ENCODE measurements at regions of chr6 and their contacts with region 1.

Region 1: DNA sequence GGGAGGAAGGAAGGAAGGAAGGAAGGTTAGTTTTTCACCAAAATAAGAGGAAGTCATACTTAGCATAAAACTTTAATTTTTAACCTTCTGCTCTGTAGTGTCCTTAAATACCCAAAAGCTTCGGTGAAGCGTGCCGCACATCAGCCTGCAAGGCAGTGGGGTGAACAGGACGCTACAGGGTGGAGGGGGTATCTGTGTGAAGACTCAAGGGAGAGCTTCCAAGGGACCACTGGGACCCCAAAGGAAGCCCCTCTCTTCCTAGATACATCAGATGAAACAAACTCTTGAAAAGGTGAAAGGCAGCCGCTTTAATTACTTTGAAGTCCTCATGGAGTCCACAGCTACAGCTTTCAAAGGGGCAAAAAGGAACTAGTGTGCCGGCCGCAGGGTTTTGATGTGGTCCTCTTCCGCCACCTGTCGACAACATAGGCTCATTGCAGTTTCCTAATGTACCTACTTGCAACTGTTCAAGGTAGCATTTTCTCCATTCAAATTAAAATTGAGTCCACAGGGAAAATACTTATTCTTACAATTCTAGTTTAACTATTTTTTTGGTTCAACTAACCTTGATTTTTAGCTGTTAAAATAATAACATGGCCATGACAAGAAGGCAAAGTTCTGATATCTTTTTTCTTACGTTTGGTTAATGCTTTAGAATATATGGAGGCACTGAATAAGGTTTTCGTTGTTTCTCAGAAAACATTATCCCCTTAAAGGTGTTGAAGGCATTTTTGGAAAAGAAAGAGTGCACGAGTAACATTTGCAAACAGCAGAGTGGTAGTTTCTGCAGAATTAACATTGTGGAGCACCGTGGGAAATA is 135.0 kb upstream of the RIPOR2 start:
- DNase-seq: peak; percentile 76
- ATAC-seq: peak; percentile 68

Region 2: DNA sequence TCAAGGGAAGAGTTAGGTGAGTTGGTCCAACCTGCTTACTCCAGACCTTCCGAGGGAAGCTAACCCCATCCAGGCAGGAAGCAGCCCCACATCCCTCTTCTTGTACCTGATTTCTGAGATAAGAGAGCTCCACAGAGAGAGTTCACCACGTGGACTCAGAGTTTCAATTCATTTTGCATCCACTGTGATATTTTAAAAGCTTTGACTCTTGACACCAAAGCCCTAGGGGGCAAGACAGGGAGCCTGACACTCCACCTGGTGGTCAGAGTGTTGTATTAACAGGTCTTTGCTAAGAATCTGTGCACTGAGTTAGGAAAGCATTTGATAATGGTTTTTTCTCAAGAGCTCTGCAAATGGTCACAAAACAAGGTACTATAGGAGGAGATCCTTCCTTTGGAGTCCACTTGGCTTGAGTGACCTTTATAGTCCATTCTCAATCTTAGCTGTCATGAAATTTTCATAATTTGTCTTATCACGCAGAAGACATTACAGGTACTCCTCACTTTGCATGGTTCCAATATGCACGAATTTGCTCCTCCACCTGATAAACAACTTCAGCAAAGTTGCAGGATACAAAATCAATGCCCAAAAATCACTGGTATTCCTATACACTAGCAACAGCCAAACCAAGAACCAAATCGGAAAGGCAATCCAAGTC is 78.8 kb before region 1 on chr6:
- intact Hi-C with region 1: loop called (anchors 5 kb)
- DNase-seq: no peak
- ATAC-seq: peak; percentile 60

Region 3: DNA sequence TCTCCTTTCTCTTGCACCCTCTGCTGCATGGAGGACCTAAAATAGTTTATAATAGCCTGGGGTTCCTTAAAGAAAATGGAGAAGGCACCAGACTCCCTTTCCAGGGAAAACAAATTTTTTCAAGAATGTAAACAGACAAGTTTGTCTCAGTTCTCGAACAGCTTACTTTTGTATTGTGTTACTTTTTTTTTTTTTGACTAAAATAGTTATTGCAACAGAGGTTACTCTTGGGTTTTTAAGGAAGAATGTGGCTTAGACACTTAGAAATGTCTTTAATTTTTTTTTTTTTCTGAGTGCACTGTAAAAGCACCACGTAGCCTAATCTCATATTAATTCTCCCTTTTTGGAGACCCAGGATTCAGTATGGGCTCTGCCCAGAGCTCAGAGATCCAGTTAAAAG is 59.8 kb after region 1 on chr6:
- intact Hi-C with region 1: no loop called
- DNase-seq: no peak
- ATAC-seq: no peak

Region 4: GRCh38 chr6:25202505-25202904 is 131.7 kb after region 1 on chr6:
- intact Hi-C with region 1: no loop called
- DNase-seq: no peak
- ATAC-seq: no peak

Region 5: GRCh38 chr6:25263657-25264056 is 192.9 kb after region 1 on chr6:
- intact Hi-C with region 1: no loop called
- DNase-seq: no peak
- ATAC-seq: no peak